ENCODE measurements at regions of chr11 and their contacts with region 1.

Region 1: DNA sequence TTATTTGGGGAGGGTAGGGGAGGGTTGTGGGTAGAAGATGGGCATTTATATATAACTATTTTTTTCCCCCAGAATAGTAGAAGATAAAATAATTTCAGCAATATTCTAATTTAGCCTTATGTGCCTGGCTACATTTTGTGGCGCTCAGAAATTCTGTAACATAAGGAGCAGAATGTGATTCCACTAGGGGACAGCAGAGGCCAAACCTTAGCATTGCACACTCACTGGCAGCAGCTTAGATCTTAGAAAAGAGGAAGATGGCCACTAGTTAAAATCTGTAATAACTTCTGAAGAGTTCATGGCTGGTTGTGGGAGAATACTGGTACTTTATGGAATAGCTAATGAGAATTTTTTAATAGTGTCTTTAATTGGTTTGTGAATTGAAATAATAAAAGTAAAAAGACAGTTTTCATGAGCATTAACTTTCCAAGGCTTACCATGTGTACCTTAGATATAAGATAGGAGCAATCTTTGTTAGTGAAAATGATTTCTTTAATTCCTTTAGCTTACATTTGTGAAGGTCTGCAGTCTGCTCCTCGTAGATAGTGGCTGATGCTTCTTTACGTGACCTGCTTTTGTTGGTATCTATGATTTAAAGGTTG is 33.1 kb downstream of the DDX10 start:
- DNase-seq: no peak
- H3K4me3 ChIP-seq: no peak overlapping the region
- H3K27ac ChIP-seq: no peak overlapping the region
- H3K4me1 ChIP-seq: no peaks in the 10 kb centered on the region
- H3K27me3 ChIP-seq: no peaks in the 10 kb centered on the region
- CTCF ChIP-seq: peak in 2 of 3 experiments; percentile 81 to 82; a peak in 3 of 4 replicates
- EP300 ChIP-seq: no peak
- POLR2A ChIP-seq: no peak
- RAD21 ChIP-seq: peak; percentile 94

Region 2: GRCh38 chr11:108871152-108871551 is 173.2 kb after region 1 on chr11:
- CTCF ChIA-PET with region 1: interaction called, 31 read pairs
- POLR2A ChIA-PET with region 1: no interaction called
- DNase-seq: peak in 1 of 2 experiments; percentile 39
- H3K4me3 ChIP-seq: no peak overlapping the region
- H3K27ac ChIP-seq: no peak overlapping the region
- H3K4me1 ChIP-seq: peaks cover 0 to 12% (median 3%) of the 10 kb centered on the region in 4 experiments; a peak in 5 of 7 replicates
- H3K27me3 ChIP-seq: peaks cover 0 to 1% (median 0%) of the 10 kb centered on the region in 4 experiments; a peak in 1 of 7 replicates
- CTCF ChIP-seq: peak; percentile 8 to 62 (median 59)
- EP300 ChIP-seq: no peak
- POLR2A ChIP-seq: no peak
- RAD21 ChIP-seq: peak; percentile 75 to 78

Measured in H1 (cell line).